Panc1 (cell line): ENCODE measurements at regions of chr22 and their contacts with region 1.

Region 1: DNA sequence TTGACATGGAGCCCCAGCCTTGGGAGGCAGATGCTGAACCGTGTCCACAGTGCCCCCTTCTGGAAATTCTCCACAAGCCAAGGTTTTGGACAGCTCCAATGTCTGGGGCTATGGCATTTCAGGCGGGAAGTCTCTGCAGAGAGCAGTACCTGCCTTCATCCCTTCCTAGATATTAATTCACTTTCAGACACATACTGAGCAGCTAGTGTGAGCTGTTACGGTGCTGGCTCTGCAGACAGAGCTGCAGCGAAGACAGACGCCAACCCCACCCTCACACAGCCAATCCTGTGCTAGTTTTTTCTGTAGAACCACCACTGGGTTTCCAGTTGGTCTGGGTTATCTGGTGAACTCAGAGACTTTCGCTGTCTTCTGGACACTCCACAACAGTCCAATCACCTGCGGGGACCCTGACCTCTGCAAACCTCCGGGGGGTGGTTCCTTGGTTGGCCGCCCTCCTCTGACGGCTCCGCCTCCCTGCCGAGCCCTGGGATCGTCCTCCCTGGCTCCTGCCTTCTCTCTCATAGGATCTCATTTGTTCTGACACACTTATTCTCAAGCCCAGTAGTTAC is 9.1 kb downstream of the LMF2 start:
- DNase-seq: peak; percentile 35
- ATAC-seq: peak; percentile 96
- H3K4me3 ChIP-seq: peak overlapping the region in 1 of 2 experiments; percentile 29; a peak in 2 of 4 replicates
- H3K27ac ChIP-seq: no peak overlapping the region
- H3K4me1 ChIP-seq: 0 out of 2 replicates have a peak, but pooled peaks cover 3% of the 10 kb centered on the region
- H3K27me3 ChIP-seq: no peaks in the 10 kb centered on the region
- CTCF ChIP-seq: peak; percentile 82

Region 2: DNA sequence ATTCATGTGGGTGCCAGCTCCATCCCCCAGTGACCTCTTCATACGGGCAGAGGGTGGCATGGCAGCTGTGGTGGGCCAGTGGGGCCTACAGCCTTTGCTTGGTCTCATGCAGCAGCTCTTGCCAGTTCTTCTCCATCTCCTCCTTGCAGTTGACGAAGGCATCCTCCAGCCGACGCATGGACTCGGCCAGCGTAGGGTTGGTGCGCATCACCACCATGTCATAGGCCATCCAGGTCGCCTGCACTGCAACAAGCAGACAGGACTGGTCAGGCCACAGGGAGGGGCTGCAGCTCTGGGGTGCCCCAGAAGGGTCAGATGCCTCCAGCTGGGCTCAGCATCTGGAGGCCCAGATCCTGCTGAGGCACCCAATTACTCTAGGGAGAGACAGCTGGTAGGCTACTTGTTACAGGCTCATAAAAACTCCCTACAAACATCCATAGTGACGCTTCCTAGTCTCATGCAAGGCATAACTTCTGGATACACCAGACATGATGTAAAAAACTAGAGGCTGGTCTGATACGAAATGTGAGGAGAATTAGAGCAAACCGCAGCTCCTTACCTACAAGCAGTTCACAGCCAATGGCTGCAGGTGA is 52.9 kb after region 1 on chr22:
- CTCF ChIA-PET with region 1: no interaction called
- POLR2A ChIA-PET with region 1: interaction called, 10 read pairs
- in situ Hi-C with region 1: no loop called
- intact Hi-C with region 1: no loop called
- DNase-seq: no peak
- ATAC-seq: no peak
- H3K4me3 ChIP-seq: no peak overlapping the region
- H3K27ac ChIP-seq: no peak overlapping the region
- H3K4me1 ChIP-seq: peaks cover under 1% of the 10 kb centered on the region; the same call in 1 of the 2 replicates
- H3K27me3 ChIP-seq: no peaks in the 10 kb centered on the region
- CTCF ChIP-seq: no peak